Endothelial cell of umbilical vein (primary cell): ENCODE measurements at regions of chr9 and their contacts with region 1.

Region 1: GRCh38 chr9:122168356-122168755 is 8.6 kb downstream of the MORN5 start:
- DNase-seq: peak; percentile 73
- H3K4me3 ChIP-seq: no peak overlapping the region
- H3K27ac ChIP-seq: no peak overlapping the region
- H3K4me1 ChIP-seq: peaks cover 18% of the 10 kb centered on the region
- H3K27me3 ChIP-seq: peaks cover 16 to 30% of the 10 kb centered on the region in 2 experiments
- CTCF ChIP-seq: no peak
- POLR2A ChIP-seq: no peak

Region 2: DNA sequence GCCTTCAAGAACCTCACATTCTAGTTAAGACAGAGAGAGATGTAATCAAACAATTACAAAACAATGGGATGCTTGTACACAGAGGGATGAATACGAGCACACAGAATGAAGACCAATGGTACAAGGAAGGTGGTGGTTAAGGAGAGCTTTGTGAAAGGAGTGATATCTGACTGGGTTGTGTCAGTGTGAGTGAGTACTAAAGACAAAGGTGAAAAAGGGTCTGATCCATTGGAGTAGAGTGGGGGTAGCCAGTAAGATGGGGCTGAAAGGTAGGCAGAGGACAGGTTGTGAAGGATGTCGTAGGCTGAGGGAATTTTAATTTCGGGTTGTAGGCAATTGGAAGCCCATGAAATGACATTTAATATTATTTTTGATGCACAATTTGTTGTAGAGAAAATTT is 86.4 kb after region 1 on chr9:
- CTCF ChIA-PET with region 1: no interaction called
- POLR2A ChIA-PET with region 1: no interaction called
- dilution Hi-C with region 1: no loop called
- intact Hi-C with region 1: loop called (anchors 1 kb)
- DNase-seq: no peak
- H3K4me3 ChIP-seq: peak overlapping the region in 1 of 3 experiments; percentile 33
- H3K27ac ChIP-seq: peak overlapping the region; percentile 88
- H3K4me1 ChIP-seq: peaks cover 37% of the 10 kb centered on the region
- H3K27me3 ChIP-seq: no peaks in the 10 kb centered on the region
- CTCF ChIP-seq: no peak
- POLR2A ChIP-seq: no peak